HEK293T (cell line): ENCODE measurements at regions of chr7 and their contacts with region 1.

Region 1: GRCh38 chr7:1065263-1066260 is 21.2 kb downstream of the GPR146 start:
- DNase-seq: peak; percentile 85

Region 2: GRCh38 chr7:1076181-1077072 is 10.9 kb after region 1 on chr7:
- CTCF ChIA-PET with region 1: interaction called, 10 read pairs
- POLR2A ChIA-PET with region 1: no interaction called
- DNase-seq: no peak